ENCODE measurements at regions of chr18 and their contacts with region 1.

Region 1: DNA sequence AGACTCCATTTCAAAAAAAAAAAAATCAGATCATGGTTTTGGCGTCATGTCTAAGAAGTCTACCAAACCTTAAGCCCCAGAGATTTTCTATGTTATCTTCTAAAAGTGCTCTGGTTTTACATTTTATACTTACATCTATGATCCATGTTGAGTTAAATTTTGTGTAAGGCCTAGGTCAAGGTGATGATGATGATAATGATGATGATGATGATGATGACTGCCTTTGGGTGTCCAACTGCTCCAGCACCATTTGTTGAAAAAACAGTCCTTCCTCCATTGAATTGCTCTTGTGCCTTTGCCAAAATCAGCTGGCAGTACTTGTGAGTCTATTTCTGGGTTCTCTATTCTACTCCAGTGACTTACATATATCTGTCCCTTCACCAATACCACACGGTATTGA is 163.2 kb upstream of the PTPRM start:
- DNase-seq: no peak
- H3K4me3 ChIP-seq: no peak overlapping the region
- H3K27me3 ChIP-seq: no peaks in the 10 kb centered on the region
- CTCF ChIP-seq: no peak

Region 2: DNA sequence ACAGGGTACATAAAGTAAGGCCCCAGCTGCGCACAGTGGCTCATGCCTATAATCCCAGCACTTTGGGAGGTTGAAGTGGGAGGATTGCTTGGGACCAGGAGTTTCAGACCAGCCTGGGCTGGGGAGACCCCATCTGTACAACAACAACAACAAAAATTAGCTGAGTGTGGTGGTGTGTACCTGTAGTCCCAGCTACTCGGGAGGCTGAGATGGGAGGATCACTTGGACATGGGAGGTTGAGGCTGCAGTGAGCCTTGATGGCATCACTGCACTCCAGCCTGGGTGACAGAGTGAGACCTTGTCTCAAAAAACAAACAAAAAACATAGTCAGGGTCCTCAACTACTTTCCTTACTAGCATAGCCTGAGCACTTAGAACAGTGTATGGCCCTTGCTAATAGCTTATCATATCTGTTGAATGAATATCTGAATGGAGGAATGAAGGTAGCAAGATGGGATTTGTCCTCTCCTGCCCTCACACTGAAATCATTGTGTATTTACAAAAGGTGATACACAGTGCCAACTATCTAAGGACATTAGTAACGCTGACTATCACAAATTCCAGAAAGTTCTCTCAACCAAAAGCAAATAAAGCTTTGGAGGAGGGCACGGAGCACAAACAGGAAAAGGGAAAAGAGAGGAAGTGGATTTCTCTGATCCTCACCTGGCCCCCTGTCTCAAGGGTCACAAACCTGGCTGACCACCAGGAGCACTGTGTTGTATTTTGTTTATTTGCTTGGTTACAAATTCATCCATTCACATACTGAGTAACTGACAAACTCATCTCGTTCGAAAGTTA is 1027.3 kb before region 1 on chr18:
- CTCF ChIA-PET with region 1: no interaction called
- POLR2A ChIA-PET with region 1: interaction called, 11 read pairs
- DNase-seq: no peak
- H3K4me3 ChIP-seq: no peak overlapping the region
- H3K27me3 ChIP-seq: no peaks in the 10 kb centered on the region
- CTCF ChIP-seq: no peak

Region 3: GRCh38 chr18:7084080-7085075 is 319.6 kb before region 1 on chr18:
- CTCF ChIA-PET with region 1: no interaction called
- POLR2A ChIA-PET with region 1: no interaction called
- DNase-seq: peak; percentile 82
- H3K4me3 ChIP-seq: no peak overlapping the region
- H3K27me3 ChIP-seq: peaks cover under 1% of the 10 kb centered on the region; the same call in 1 of the 2 replicates
- CTCF ChIP-seq: no peak